ENCODE measurements at regions of chr7 and their contacts with region 1.

Region 1: DNA sequence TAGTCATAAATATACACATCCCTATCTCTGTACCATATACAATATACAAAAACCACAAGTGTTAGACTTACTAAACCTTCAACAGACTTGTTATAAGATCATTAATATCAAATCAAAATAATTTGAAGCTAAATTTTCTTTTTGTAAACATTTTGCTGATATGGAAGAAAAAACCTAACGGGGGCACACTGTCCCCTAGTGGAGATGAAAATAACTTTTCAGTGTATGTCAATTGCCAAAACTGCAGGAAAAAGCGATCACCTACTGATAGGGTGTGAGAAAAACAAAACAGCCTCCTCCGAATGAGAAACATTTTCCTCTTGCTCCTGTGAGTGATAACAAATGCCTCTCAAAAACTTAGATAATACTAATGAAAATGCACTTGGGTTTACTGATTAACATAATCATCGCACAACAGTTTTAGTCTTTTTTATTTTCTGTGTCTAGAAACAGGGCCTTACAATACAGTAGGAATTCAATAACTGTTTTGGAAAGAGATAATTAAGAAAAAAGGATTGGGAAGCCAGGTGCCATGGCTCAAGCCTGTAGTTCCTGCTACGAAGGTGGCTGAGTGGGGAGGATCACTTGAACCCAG is 322.7 kb downstream of the CRPPA start:
- DNase-seq: peak; percentile 63
- H3K4me3 Mint-ChIP-seq: no peak overlapping the region
- H3K27ac Mint-ChIP-seq: no peak overlapping the region
- H3K4me1 Mint-ChIP-seq: peaks cover 14% of the 10 kb centered on the region
- H3K27me3 Mint-ChIP-seq: no peaks in the 10 kb centered on the region
- CTCF ChIP-seq: peak; percentile 93

Region 2: DNA sequence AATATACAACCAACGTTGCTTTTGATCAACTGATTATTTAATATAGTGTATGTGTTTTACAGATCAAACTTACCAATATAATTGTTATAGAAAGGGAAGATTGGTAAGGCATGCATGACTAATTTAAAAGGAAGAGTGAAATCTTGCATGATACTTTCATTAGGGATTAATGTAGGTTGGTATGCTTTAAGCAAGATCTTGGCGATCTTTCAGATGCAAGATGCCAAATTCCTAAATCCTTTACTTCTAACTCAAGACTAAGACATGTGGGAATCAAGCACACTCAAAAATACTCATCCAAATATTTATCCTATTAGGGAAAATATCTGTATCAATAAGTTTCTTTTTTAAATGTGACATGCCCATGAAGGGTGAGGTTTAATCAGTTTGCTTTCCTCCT is 90.8 kb before region 1 on chr7:
- CTCF ChIA-PET with region 1: no interaction called
- intact Hi-C with region 1: no loop called
- DNase-seq: no peak
- H3K4me3 Mint-ChIP-seq: no peak overlapping the region
- H3K27ac Mint-ChIP-seq: no peak overlapping the region
- H3K4me1 Mint-ChIP-seq: no peaks in the 10 kb centered on the region
- H3K27me3 Mint-ChIP-seq: no peaks in the 10 kb centered on the region
- CTCF ChIP-seq: no peak

Region 3: DNA sequence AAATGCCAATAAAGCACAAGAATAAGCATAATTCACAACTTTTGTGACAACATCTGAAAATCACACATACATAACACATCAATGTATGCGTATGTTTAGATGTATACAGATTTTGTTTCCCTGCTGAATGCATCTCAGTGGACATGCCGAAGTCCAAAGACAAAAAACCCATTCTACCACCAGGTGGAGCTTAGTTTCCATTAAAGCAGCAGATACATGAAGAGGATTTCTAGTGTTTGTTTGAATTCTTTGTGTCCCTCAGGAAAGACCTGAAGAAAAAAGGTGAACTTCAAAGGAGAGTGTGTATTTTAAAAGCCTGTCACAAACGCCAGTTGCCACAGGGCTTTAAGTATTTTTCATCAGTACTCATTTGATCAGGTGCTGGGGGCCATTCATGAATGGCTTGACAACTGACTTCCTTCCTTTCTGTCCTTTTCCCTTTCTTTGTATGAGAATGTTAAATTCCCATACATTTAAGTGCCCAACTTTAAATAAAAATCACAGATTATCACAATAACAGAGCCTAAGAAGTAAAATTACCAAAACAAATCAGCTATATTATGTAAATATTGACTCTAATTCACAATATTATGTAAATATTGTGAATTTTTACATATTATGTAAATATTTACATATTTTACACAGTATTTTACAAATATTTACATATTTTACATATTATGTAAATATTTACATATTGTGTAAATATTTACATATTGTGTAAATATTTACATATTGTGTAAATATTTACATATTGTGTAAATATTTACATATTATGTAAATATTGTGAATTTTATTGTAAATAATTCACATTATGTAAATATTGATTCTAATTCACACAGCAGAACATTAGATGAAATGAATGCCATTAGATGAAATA is 20.4 kb before region 1 on chr7:
- CTCF ChIA-PET with region 1: interaction called, 27 read pairs
- intact Hi-C with region 1: loop called (anchors 1 kb)
- DNase-seq: peak; percentile 78
- H3K4me3 Mint-ChIP-seq: no peak overlapping the region
- H3K27ac Mint-ChIP-seq: peak overlapping the region; percentile 71
- H3K4me1 Mint-ChIP-seq: peaks cover 31% of the 10 kb centered on the region
- H3K27me3 Mint-ChIP-seq: no peaks in the 10 kb centered on the region
- CTCF ChIP-seq: peak; percentile 92